WTC11 (cell line): ENCODE measurements at regions of chr1 and their contacts with region 1.

Region 1: DNA sequence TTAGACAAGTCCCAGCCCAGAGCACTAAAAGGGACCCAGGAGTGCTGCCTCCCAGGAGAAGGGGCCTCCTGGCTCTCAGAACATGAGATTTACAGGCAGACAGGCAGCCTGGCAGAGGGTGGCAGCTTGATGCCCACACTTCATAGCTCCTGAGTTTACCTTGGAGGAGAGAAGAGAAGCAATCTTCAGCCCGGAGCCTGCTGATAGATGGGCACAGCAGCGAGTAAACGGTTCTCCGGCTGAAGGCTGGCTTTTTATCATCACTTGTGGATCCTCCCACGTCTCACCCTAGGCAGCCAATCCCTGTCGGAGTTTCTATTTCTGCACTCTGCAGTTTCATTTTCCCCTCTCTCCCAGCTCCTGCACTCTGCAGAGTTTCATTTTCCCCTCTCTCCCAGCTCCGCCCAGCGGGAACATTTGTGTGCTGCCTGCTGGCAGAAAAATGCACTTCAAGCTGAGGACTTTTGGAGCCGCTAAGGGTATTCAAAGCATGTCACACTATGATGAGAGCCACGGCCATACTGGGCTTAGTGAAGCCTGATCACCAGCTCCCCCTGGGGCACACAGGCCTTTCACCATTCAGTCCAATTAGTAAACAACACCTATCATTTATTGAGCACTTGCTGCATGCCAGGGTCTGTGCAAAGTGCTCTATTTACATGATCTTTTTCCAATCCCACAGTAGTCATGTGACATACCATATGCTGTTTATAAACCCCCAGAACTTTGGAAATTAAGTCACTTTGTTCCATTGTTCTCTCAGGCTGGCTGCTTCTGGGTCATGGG is at the start of gene IFI6:
- DNase-seq: peak; percentile 60
- ATAC-seq: peak; percentile 84
- H3K4me3 Mint-ChIP-seq: peak within 1 kb of the TSS; percentile 75
- H3K27ac Mint-ChIP-seq: peak within 1 kb of the TSS; percentile 94
- H3K4me1 Mint-ChIP-seq: peaks cover 12% of the 10 kb centered on the region
- H3K27me3 Mint-ChIP-seq: peaks cover 19% of the 10 kb centered on the region
- CTCF ChIP-seq: no peak
- total RNA-seq, gene IFI6: 4.5 to 9.4 TPM (median 6.4 TPM) in 3 replicates

Region 2: DNA sequence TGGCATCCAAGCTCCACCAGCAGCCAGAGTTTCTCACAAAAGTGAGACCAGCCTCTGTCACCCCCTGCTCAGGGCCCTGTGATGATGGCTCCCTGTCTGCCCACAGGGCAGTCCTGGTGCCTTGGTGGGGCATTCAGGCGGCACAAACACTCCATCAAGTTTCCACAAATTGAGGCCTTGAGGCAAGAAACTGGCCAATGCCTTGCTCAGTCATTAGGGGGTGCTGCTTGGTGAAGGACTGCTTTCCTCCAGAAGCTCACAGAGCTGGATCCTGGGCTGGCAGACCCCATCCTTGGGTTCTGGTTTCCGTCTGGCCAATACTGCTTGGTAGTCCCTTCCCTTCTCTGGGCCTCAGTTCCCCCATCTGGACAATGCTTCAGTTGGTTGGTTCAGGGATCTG is 55.7 kb before region 1 on chr1:
- CTCF ChIA-PET with region 1: interaction called, 367 read pairs
- POLR2A ChIA-PET with region 1: no interaction called
- DNase-seq: no peak
- ATAC-seq: peak; percentile 6; the same call in 1 of the 2 replicates
- H3K4me3 Mint-ChIP-seq: peak overlapping the region; percentile 48
- H3K27ac Mint-ChIP-seq: no peak overlapping the region
- H3K4me1 Mint-ChIP-seq: peaks cover 15% of the 10 kb centered on the region
- H3K27me3 Mint-ChIP-seq: peaks cover 15% of the 10 kb centered on the region
- CTCF ChIP-seq: no peak

Region 3: DNA sequence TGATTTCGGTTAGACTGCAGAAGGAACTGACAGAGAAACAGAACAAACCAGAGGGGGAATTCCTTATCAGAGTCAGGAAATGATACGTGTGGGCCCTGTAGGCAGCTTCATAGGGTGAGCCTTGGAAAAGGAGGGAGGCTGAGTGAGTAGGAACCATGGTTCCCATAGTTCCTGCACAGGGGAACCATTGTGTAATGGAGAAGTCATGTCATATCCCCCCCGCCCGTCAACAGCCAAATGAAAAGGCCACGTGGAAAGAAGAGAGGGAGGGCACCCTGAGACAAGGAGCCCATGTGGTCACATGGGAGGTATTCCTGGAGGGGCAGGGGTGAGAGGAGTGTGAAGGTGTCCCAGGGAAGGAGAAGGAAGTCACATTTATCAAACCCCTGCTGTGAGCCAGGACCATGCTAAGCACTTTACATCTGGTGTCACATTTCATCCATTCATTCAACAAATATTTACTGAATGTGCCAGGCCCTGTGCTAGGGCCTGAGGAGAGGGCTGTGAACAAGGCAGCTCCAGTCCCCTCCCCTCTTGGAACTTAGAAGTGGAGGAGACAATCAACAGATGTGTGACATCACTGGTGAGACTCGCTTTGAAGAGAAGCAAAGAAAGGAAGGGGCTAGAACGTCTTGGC is 21.5 kb before region 1 on chr1:
- CTCF ChIA-PET with region 1: interaction called, 16 read pairs
- POLR2A ChIA-PET with region 1: no interaction called
- DNase-seq: no peak
- ATAC-seq: peak; percentile 79
- H3K4me3 Mint-ChIP-seq: no peak overlapping the region; the same call in 1 of the 2 replicates
- H3K27ac Mint-ChIP-seq: peak overlapping the region; percentile 43
- H3K4me1 Mint-ChIP-seq: peaks cover 26% of the 10 kb centered on the region
- H3K27me3 Mint-ChIP-seq: no peaks in the 10 kb centered on the region
- CTCF ChIP-seq: no peak

Region 4: GRCh38 chr1:27689423-27690173 is 17.4 kb after region 1 on chr1:
- CTCF ChIA-PET with region 1: interaction called, 24 read pairs
- POLR2A ChIA-PET with region 1: no interaction called
- DNase-seq: no peak
- ATAC-seq: no peak
- H3K4me3 Mint-ChIP-seq: no peak overlapping the region
- H3K27ac Mint-ChIP-seq: peak overlapping the region; percentile 2; the same call in 1 of the 2 replicates
- H3K4me1 Mint-ChIP-seq: peaks cover 24% of the 10 kb centered on the region
- H3K27me3 Mint-ChIP-seq: peaks cover 3% of the 10 kb centered on the region; the same call in 1 of the 2 replicates
- CTCF ChIP-seq: no peak

Region 5: GRCh38 chr1:27725374-27726173 is 53.4 kb after region 1 on chr1 and contains the start of gene FAM76A:
- CTCF ChIA-PET with region 1: interaction called, 83 read pairs
- POLR2A ChIA-PET with region 1: interaction called, 6 read pairs
- DNase-seq: peak; percentile 100
- ATAC-seq: peak; percentile 96
- H3K4me3 Mint-ChIP-seq: peak within 1 kb of the TSS; percentile 84
- H3K27ac Mint-ChIP-seq: peak within 1 kb of the TSS; percentile 90
- H3K4me1 Mint-ChIP-seq: peaks cover 8% of the 10 kb centered on the region
- H3K27me3 Mint-ChIP-seq: peaks cover 11% of the 10 kb centered on the region
- CTCF ChIP-seq: no peak
- total RNA-seq, gene FAM76A: 12.5 to 14.5 TPM (median 12.8 TPM) in 3 replicates